ENCODE measurements at regions of chr7 and their contacts with region 1.

Region 1: GRCh38 chr7:135147899-135148721 is at the start of gene TMEM140:
- DNase-seq: peak; percentile 73
- H3K4me3 Mint-ChIP-seq: peak within 1 kb of the TSS; percentile 83
- H3K27ac Mint-ChIP-seq: peak within 1 kb of the TSS; percentile 95
- H3K4me1 Mint-ChIP-seq: peaks cover 60% of the 10 kb centered on the region
- H3K27me3 Mint-ChIP-seq: no peaks in the 10 kb centered on the region
- total RNA-seq, gene TMEM140: 8.6 to 10.0 TPM

Region 2: DNA sequence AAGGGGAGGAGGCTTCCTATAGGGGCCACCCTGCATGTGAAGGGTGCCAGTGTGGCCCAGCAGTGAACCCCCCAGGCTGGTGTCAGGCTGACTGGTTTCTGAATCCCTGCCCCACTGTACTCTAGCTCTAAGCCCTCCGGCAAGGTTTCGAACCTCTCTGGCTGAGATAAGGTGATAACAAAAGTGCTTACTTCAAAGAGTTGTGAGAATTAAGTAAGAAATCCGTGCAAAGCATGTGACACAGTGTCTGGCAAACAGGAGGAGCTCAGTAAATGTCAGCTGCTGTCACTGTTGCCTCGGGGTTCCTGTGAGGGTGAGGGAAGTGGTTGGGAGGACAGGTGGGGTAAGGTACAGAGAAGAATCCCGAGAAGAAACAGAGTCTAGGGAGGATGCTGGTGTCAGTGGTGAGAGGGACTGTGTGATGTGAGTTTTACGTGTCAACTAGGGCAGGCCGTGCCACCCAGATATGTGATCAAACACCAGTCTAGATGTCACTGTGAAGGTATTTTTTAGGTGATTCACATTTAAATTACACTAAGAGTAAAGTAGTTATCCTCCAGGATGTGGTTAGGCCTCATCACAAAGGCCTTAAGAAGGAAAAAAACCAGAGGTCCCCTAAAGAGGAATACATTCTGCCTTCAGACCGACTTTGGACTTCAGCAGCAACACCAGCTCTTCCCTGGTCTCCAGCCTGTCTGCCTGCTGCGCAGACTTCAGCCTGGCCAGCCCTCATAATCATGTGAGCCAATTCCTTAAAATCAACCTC is 437.1 kb before region 1 on chr7:
- CTCF ChIA-PET with region 1: no interaction called
- POLR2A ChIA-PET with region 1: no interaction called
- intact Hi-C with region 1: loop called (anchors 1 kb)
- DNase-seq: peak; percentile 78
- H3K4me3 Mint-ChIP-seq: peak overlapping the region; percentile 76
- H3K27ac Mint-ChIP-seq: peak overlapping the region; percentile 97
- H3K4me1 Mint-ChIP-seq: peaks cover 30% of the 10 kb centered on the region
- H3K27me3 Mint-ChIP-seq: no peaks in the 10 kb centered on the region

Region 3: GRCh38 chr7:134865001-134865845 is 282.9 kb before region 1 on chr7:
- CTCF ChIA-PET with region 1: no interaction called
- POLR2A ChIA-PET with region 1: no interaction called
- intact Hi-C with region 1: loop called (anchors 5 kb)
- DNase-seq: peak; percentile 56
- H3K4me3 Mint-ChIP-seq: peak overlapping the region; percentile 50
- H3K27ac Mint-ChIP-seq: peak overlapping the region; percentile 61
- H3K4me1 Mint-ChIP-seq: peaks cover 18% of the 10 kb centered on the region
- H3K27me3 Mint-ChIP-seq: no peaks in the 10 kb centered on the region

Region 4: GRCh38 chr7:134986363-134987251 is 161.5 kb before region 1 on chr7 and contains the start of gene AGBL3:
- CTCF ChIA-PET with region 1: interaction called, 26 read pairs
- POLR2A ChIA-PET with region 1: interaction called, 10 read pairs
- intact Hi-C with region 1: loop called (anchors 1 kb)
- DNase-seq: peak; percentile 95
- H3K4me3 Mint-ChIP-seq: peak within 1 kb of the TSS; percentile 95
- H3K27ac Mint-ChIP-seq: peak within 1 kb of the TSS; percentile 95
- H3K4me1 Mint-ChIP-seq: peaks cover 35% of the 10 kb centered on the region
- H3K27me3 Mint-ChIP-seq: no peaks in the 10 kb centered on the region
- total RNA-seq, gene AGBL3: 3.3 to 3.4 TPM

Region 5: GRCh38 chr7:135077642-135078041 is 70.5 kb before region 1 on chr7:
- CTCF ChIA-PET with region 1: no interaction called
- POLR2A ChIA-PET with region 1: no interaction called
- intact Hi-C with region 1: no loop called
- DNase-seq: no peak
- H3K4me3 Mint-ChIP-seq: no peak overlapping the region
- H3K27ac Mint-ChIP-seq: no peak overlapping the region
- H3K4me1 Mint-ChIP-seq: no peaks in the 10 kb centered on the region
- H3K27me3 Mint-ChIP-seq: no peaks in the 10 kb centered on the region

Region 6: DNA sequence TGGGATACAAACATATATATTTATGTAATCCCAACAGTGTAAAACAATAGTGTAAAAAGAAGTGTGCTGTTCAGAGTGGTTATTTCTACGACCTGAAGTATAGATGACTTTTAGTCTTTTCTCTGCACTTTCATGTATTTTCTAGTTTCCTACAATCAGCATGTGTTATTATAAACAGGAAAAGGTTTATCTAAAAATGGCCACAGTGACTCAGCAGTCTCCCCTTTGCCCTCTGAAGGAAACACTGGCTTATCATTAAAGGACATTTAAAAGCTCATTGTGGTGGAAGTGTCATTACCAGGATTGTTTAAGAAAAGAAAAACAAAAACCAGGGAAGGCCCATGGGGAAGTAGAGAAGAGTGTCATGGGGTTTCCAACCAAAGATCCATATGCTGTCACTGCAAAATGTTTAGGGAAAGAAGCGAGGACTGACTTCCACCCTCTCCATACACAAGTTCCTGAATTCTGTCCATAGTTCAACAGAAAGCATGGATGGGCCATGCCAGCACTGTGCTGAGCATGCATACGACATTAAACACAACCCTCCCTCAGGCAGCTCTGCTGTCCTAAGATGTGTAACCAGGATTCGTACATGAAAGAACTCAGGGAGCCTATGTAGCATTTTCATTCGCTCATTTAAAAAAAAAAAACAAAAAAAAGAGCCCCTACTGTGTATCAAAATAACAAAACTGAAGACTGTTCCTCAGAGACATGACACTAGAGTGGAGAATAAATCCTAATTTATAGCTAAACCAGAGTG is 12.2 kb after region 1 on chr7:
- CTCF ChIA-PET with region 1: interaction called, 5 read pairs
- POLR2A ChIA-PET with region 1: interaction called, 14 read pairs
- intact Hi-C with region 1: loop called (anchors 1 kb)
- DNase-seq: no peak
- H3K4me3 Mint-ChIP-seq: no peak overlapping the region
- H3K27ac Mint-ChIP-seq: peak overlapping the region; percentile 85
- H3K4me1 Mint-ChIP-seq: peaks cover 28% of the 10 kb centered on the region
- H3K27me3 Mint-ChIP-seq: no peaks in the 10 kb centered on the region

Region 7: GRCh38 chr7:135211179-135211945 is 63.3 kb after region 1 on chr7 and contains the start of gene WDR91:
- CTCF ChIA-PET with region 1: no interaction called
- POLR2A ChIA-PET with region 1: interaction called, 5 read pairs
- intact Hi-C with region 1: loop called (anchors 1 kb)
- DNase-seq: peak; percentile 98
- H3K4me3 Mint-ChIP-seq: peak within 1 kb of the TSS; percentile 93
- H3K27ac Mint-ChIP-seq: peak within 1 kb of the TSS; percentile 83
- H3K4me1 Mint-ChIP-seq: peaks cover 23% of the 10 kb centered on the region
- H3K27me3 Mint-ChIP-seq: no peaks in the 10 kb centered on the region
- total RNA-seq, gene WDR91: 10.3 to 11.0 TPM

Region 8: GRCh38 chr7:135558337-135558767 is 410.2 kb after region 1 on chr7:
- CTCF ChIA-PET with region 1: no interaction called
- POLR2A ChIA-PET with region 1: no interaction called
- intact Hi-C with region 1: loop called (anchors 5 kb)
- DNase-seq: peak; percentile 79
- H3K4me3 Mint-ChIP-seq: no peak overlapping the region
- H3K27ac Mint-ChIP-seq: no peak overlapping the region
- H3K4me1 Mint-ChIP-seq: peaks cover 16% of the 10 kb centered on the region
- H3K27me3 Mint-ChIP-seq: no peaks in the 10 kb centered on the region

Measured in activated CD4-positive, alpha-beta memory T cell treated with anti-CD3 and anti-CD28 coated beads for 36 hours (primary cell).